GM13976 (cell line): ENCODE measurements at regions of chr13 and their contacts with region 1.

Region 1: GRCh38 chr13:72808917-72809500 is 27.1 kb downstream of the PIBF1 start:
- DNase-seq: peak; percentile 11
- CTCF ChIP-seq: no peak

Region 2: GRCh38 chr13:72886272-72887062 is 77.5 kb after region 1 on chr13:
- in situ Hi-C with region 1: no loop called
- DNase-seq: no peak
- CTCF ChIP-seq: no peak

Region 3: GRCh38 chr13:73708393-73708985 is 899.5 kb after region 1 on chr13:
- in situ Hi-C with region 1: loop called (anchors 25 kb)
- DNase-seq: peak; percentile 46
- CTCF ChIP-seq: peak; percentile 61